HepG2 (cell line): ENCODE measurements at regions of chr3 and their contacts with region 1.

Region 1: GRCh38 chr3:183085634-183086390 is 13.5 kb downstream of the MCCC1 start:
- DNase-seq: no peak
- ATAC-seq: no peak; the same call in 2 of the 3 replicates
- H3K4me3 ChIP-seq: no peak overlapping the region
- H3K27ac ChIP-seq: no peak overlapping the region
- H3K4me1 ChIP-seq: no peaks in the 10 kb centered on the region
- H3K27me3 ChIP-seq: no peaks in the 10 kb centered on the region
- CTCF ChIP-seq: peak; percentile 49
- EP300 ChIP-seq: no peak
- POLR2A ChIP-seq: no peak
- RAD21 ChIP-seq: no peak

Region 2: DNA sequence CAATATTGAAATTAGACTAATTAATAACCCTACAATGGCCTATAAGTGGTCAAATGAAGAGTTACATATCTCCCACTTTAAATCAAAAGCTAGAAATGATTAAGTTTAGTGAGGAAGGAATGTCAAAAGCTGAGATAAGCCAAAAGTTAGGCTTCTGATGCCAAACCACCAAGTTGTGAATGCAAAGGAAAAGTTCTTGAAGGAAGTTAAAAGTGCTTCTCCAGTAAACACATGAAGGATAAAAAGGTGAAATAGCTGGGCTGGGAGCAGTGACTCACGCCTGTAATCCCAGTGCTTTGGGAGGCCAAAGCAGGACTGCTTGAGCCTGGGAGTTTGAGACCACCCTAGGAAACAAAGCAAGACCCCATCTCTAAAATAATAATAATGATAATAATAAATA is 58.5 kb before region 1 on chr3:
- CTCF ChIA-PET with region 1: no interaction called
- POLR2A ChIA-PET with region 1: no interaction called
- in situ Hi-C with region 1: no loop called
- intact Hi-C with region 1: no loop called
- DNase-seq: no peak
- ATAC-seq: no peak
- H3K4me3 ChIP-seq: no peak overlapping the region
- H3K27ac ChIP-seq: no peak overlapping the region
- H3K4me1 ChIP-seq: peaks cover 12% of the 10 kb centered on the region
- H3K27me3 ChIP-seq: no peaks in the 10 kb centered on the region
- CTCF ChIP-seq: no peak
- EP300 ChIP-seq: no peak
- POLR2A ChIP-seq: no peak
- RAD21 ChIP-seq: no peak

Region 3: DNA sequence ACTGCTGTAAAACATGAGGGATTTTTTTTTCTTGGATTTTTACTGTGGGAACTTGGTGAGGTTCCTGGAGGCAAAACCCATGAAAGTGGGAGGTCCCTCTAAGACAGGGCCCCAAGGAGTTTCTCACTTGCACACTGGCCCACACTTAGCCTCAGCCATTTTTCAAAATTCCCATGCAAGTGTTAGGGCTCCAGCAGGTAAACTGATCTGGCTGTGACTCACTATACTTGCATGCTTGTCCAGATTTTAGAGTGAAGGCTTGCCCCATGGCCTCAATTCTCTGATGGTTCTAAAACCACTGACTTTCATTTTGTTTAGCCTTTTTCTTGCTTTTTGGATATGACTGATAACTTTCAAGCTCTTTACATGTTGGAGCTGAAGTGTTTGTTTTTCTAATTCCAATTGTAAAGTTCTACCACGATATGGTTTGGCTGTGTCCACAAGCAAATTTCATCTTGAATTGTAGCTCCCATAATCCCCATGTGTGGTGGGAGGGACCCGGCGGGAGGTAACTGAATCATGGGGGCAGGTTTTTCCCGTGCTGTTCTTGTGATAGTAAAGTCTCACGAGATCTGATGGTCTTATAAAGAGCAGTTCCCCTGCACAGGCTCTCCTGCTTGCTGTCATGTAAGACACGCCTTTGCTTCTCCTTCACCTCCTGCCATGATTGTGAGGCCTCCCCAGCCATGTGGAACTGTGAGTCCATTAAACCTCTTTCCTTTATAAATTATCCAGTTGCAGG is 24.2 kb before region 1 on chr3:
- CTCF ChIA-PET with region 1: no interaction called
- POLR2A ChIA-PET with region 1: no interaction called
- in situ Hi-C with region 1: no loop called
- intact Hi-C with region 1: loop called (anchors 1 kb)
- DNase-seq: no peak
- ATAC-seq: no peak
- H3K4me3 ChIP-seq: no peak overlapping the region
- H3K27ac ChIP-seq: no peak overlapping the region
- H3K4me1 ChIP-seq: no peaks in the 10 kb centered on the region
- H3K27me3 ChIP-seq: no peaks in the 10 kb centered on the region
- CTCF ChIP-seq: no peak
- EP300 ChIP-seq: no peak
- POLR2A ChIP-seq: no peak
- RAD21 ChIP-seq: no peak